Activated CD8-positive, alpha-beta T cell treated with anti-CD3 and anti-CD28 coated beads for 36 hours (primary cell): ENCODE measurements at regions of chr12 and their contacts with region 1.

Region 1: DNA sequence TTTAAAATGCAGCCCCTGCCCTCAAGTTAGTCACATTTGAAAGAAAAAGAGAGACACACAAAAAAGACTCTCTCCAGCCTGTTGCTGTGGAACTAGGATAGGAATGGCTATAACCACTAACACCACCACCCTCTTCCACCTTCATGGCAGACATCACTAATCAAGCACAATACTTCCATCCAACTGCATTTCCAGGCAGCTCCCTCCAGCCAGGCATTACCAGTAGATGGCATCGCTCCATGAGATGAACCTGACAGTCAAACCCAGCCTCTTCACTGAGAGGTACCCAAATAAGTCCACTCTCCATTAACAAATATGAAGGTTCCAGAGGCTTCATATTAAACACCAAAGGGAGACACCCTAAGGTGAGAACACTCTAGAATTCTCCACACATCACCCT is 24.4 kb downstream of the SLC8B1 start:
- DNase-seq: no peak
- ATAC-seq: no peak
- H3K4me3 Mint-ChIP-seq: no peak overlapping the region
- H3K27ac Mint-ChIP-seq: no peak overlapping the region
- H3K4me1 Mint-ChIP-seq: no peaks in the 10 kb centered on the region
- H3K27me3 Mint-ChIP-seq: no peaks in the 10 kb centered on the region
- CTCF ChIP-seq: no peak

Region 2: GRCh38 chr12:113325916-113326315 is 15.4 kb after region 1 on chr12:
- CTCF ChIA-PET with region 1: no interaction called
- POLR2A ChIA-PET with region 1: no interaction called
- intact Hi-C with region 1: no loop called
- DNase-seq: no peak
- ATAC-seq: no peak
- H3K4me3 Mint-ChIP-seq: no peak overlapping the region
- H3K27ac Mint-ChIP-seq: no peak overlapping the region
- H3K4me1 Mint-ChIP-seq: peaks cover 28% of the 10 kb centered on the region
- H3K27me3 Mint-ChIP-seq: no peaks in the 10 kb centered on the region
- CTCF ChIP-seq: no peak

Region 3: GRCh38 chr12:113341535-113341934 is 31.0 kb after region 1 on chr12:
- CTCF ChIA-PET with region 1: no interaction called
- POLR2A ChIA-PET with region 1: no interaction called
- intact Hi-C with region 1: no loop called
- DNase-seq: no peak
- ATAC-seq: no peak
- H3K4me3 Mint-ChIP-seq: no peak overlapping the region
- H3K27ac Mint-ChIP-seq: no peak overlapping the region
- H3K4me1 Mint-ChIP-seq: no peaks in the 10 kb centered on the region
- H3K27me3 Mint-ChIP-seq: no peaks in the 10 kb centered on the region
- CTCF ChIP-seq: no peak

Region 4: GRCh38 chr12:113424915-113425823 is 114.7 kb after region 1 on chr12:
- CTCF ChIA-PET with region 1: interaction called, 11 read pairs
- POLR2A ChIA-PET with region 1: no interaction called
- intact Hi-C with region 1: loop called (anchors 2 kb)
- DNase-seq: peak; percentile 75
- ATAC-seq: peak; percentile 70
- H3K4me3 Mint-ChIP-seq: no peak overlapping the region
- H3K27ac Mint-ChIP-seq: no peak overlapping the region
- H3K4me1 Mint-ChIP-seq: peaks cover 8% of the 10 kb centered on the region
- H3K27me3 Mint-ChIP-seq: peaks cover 8% of the 10 kb centered on the region
- CTCF ChIP-seq: peak; percentile 86